Activated naive CD4-positive, alpha-beta T cell treated with anti-CD3 and anti-CD28 coated beads, Interleukin-2, amount 10 ng/mL, durations not matched to agents 7 days and 5 days (primary cell): ENCODE measurements at regions of chr1 and their contacts with region 1.

Region 1: GRCh38 chr1:2044510-2045319 is 5.5 kb upstream of the PRKCZ start:
- DNase-seq: peak; percentile 80
- H3K4me3 Mint-ChIP-seq: no peak overlapping the region
- H3K27ac Mint-ChIP-seq: peak overlapping the region; percentile 62
- H3K4me1 Mint-ChIP-seq: peaks cover 24% of the 10 kb centered on the region
- H3K27me3 Mint-ChIP-seq: peaks cover 65% of the 10 kb centered on the region

Region 2: DNA sequence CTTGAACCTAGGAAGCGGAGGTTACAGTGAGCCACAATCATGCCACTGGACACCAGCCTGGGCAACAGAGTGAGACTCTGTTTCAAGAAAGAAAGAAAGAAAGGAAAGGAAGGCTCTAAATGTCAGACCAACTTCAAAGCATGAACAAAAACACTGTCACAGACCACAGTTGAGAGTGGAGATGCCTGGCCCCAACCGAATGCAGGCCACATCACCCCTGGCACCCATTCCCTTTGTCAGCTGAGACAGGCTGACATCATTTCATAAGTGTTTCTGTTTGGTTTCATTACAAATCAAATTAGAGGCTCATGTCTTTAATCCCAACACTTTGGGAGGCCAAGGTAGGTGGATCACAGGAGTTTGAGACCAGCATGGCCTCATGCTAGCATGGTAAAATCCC is 237.8 kb before region 1 on chr1:
- CTCF ChIA-PET with region 1: no interaction called
- DNase-seq: no peak
- H3K4me3 Mint-ChIP-seq: no peak overlapping the region
- H3K27ac Mint-ChIP-seq: peak overlapping the region; percentile 28
- H3K4me1 Mint-ChIP-seq: peaks cover 8% of the 10 kb centered on the region
- H3K27me3 Mint-ChIP-seq: no peaks in the 10 kb centered on the region

Region 3: GRCh38 chr1:1943834-1944570 is 100.7 kb before region 1 on chr1:
- CTCF ChIA-PET with region 1: interaction called, 33 read pairs
- DNase-seq: peak; percentile 68
- H3K4me3 Mint-ChIP-seq: no peak overlapping the region
- H3K27ac Mint-ChIP-seq: no peak overlapping the region
- H3K4me1 Mint-ChIP-seq: no peaks in the 10 kb centered on the region
- H3K27me3 Mint-ChIP-seq: peaks cover 4% of the 10 kb centered on the region

Region 4: GRCh38 chr1:1954831-1955441 is 89.8 kb before region 1 on chr1:
- CTCF ChIA-PET with region 1: interaction called, 105 read pairs
- DNase-seq: no peak
- H3K4me3 Mint-ChIP-seq: no peak overlapping the region
- H3K27ac Mint-ChIP-seq: peak overlapping the region; percentile 64
- H3K4me1 Mint-ChIP-seq: peaks cover 4% of the 10 kb centered on the region
- H3K27me3 Mint-ChIP-seq: peaks cover 22% of the 10 kb centered on the region

Region 5: GRCh38 chr1:1959840-1960479 is 84.8 kb before region 1 on chr1:
- CTCF ChIA-PET with region 1: interaction called, 105 read pairs
- DNase-seq: peak; percentile 83
- H3K4me3 Mint-ChIP-seq: no peak overlapping the region
- H3K27ac Mint-ChIP-seq: no peak overlapping the region
- H3K4me1 Mint-ChIP-seq: peaks cover under 1% of the 10 kb centered on the region
- H3K27me3 Mint-ChIP-seq: peaks cover 52% of the 10 kb centered on the region

Region 6: GRCh38 chr1:2027839-2028583 is 16.7 kb before region 1 on chr1:
- CTCF ChIA-PET with region 1: interaction called, 10 read pairs
- DNase-seq: no peak
- H3K4me3 Mint-ChIP-seq: no peak overlapping the region
- H3K27ac Mint-ChIP-seq: no peak overlapping the region
- H3K4me1 Mint-ChIP-seq: peaks cover 7% of the 10 kb centered on the region
- H3K27me3 Mint-ChIP-seq: peaks cover 13% of the 10 kb centered on the region

Region 7: GRCh38 chr1:2065699-2066098 is 21.0 kb after region 1 on chr1:
- CTCF ChIA-PET with region 1: no interaction called
- DNase-seq: no peak
- H3K4me3 Mint-ChIP-seq: no peak overlapping the region
- H3K27ac Mint-ChIP-seq: no peak overlapping the region
- H3K4me1 Mint-ChIP-seq: no peaks in the 10 kb centered on the region
- H3K27me3 Mint-ChIP-seq: no peaks in the 10 kb centered on the region

Region 8: DNA sequence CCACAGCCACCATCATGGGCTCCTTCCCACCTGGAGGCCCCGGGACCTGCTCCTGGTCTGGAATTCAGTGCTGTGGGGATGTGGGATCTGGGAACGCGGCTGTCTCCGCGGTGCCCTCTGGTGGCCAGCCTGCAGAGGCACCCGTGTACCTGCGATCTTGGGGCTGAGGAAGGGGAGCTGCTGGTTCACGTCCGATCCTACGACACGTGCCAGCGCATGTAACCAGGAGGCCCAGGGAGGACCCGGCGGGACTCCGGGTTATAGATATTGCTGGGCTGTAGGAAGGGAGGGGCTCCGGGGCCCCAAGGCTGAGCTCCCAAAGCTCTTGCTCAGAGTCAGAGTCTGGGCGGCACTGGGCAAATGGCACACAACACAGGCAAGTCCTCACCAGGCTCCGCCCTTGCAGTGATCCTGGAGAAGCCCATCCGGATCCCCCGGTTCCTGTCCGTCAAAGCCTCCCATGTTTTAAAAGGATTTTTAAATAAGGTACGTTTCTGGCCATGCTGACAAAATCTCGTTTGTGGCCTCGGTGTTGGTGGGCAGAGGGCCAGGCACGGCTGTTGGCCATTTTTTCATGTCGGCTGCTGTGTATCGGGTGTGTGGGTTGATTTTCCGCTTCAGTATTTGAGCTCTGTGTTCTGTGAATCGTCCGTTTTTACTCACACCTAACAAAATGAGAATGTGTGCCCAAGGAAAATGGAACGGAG is 129.8 kb after region 1 on chr1:
- CTCF ChIA-PET with region 1: no interaction called
- DNase-seq: peak; percentile 55
- H3K4me3 Mint-ChIP-seq: no peak overlapping the region
- H3K27ac Mint-ChIP-seq: no peak overlapping the region
- H3K4me1 Mint-ChIP-seq: peaks cover 2% of the 10 kb centered on the region
- H3K27me3 Mint-ChIP-seq: no peaks in the 10 kb centered on the region